ENCODE measurements at regions of chr11 and their contacts with region 1.

Region 1: DNA sequence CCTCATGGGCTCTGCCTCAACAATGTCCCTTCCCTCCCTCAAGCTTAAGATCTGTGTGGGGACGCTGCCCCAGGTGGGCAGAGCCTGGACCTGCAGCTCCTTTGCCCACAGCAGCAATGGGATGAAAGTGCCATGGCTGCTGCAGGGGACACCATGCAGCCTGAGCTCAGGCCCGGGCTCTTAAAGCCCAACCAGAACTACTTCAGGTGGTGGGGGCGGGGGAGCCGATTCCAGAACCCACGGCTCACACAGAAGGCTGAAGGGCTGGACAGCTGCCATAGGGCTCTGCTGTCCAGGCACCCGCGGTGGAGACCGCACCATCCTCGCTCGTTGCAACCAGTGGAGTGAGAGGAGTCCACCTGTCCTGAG is 12.5 kb downstream of the CHID1 start:
- DNase-seq: no peak
- ATAC-seq: peak; percentile 77
- H3K4me3 ChIP-seq: no peak overlapping the region
- H3K27ac ChIP-seq: no peak overlapping the region
- H3K4me1 ChIP-seq: peaks cover 3% of the 10 kb centered on the region; the same call in 1 of the 2 replicates
- H3K27me3 ChIP-seq: no peaks in the 10 kb centered on the region
- CTCF ChIP-seq: peak; percentile 79; the same call in 1 of the 2 replicates

Region 2: DNA sequence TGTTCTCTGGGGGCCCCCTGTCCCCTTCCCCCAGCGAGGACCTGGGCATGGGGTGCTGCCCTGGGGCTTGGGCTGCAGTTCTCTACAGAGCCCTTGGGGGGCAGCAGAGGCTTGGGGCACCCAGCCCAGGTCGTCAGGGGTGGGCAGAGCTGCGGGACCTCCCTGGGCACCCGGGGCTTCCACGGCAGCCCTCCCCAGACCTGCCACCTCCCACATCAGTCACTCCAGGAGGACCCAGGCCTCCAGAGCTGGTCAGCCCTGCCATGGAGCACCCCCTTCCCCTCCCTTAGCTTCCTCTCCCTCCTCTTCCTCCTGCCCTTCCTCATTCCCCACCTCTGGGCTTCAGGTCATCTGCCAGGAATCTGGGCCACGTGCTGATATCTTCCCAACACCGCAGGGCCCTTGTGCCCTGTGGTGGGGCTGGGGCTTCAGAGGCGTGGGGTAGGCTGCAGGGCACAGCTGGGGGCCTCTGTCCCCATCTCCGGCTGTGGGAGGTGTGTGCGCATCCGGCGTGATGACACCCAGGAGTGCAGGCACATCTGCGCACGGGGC is 49.7 kb before region 1 on chr11:
- CTCF ChIA-PET with region 1: interaction called, 17 read pairs
- POLR2A ChIA-PET with region 1: no interaction called
- in situ Hi-C with region 1: no loop called
- intact Hi-C with region 1: no loop called
- DNase-seq: no peak
- ATAC-seq: no peak
- H3K4me3 ChIP-seq: no peak overlapping the region
- H3K27ac ChIP-seq: peak overlapping the region; percentile 21
- H3K4me1 ChIP-seq: peaks cover 67% of the 10 kb centered on the region
- H3K27me3 ChIP-seq: no peaks in the 10 kb centered on the region
- CTCF ChIP-seq: peak; percentile 99

Region 3: GRCh38 chr11:942823-943222 is 44.7 kb after region 1 on chr11:
- CTCF ChIA-PET with region 1: no interaction called
- POLR2A ChIA-PET with region 1: no interaction called
- in situ Hi-C with region 1: no loop called
- intact Hi-C with region 1: no loop called
- DNase-seq: no peak
- ATAC-seq: no peak
- H3K4me3 ChIP-seq: no peak overlapping the region
- H3K27ac ChIP-seq: peak overlapping the region; percentile 10; the same call in 1 of the 2 replicates
- H3K4me1 ChIP-seq: peaks cover 6% of the 10 kb centered on the region; the same call in 1 of the 2 replicates
- H3K27me3 ChIP-seq: no peaks in the 10 kb centered on the region
- CTCF ChIP-seq: no peak